Naive thymus-derived CD4-positive, alpha-beta T cell (primary cell): ENCODE measurements at regions of chr12 and their contacts with region 1.

Region 1: GRCh38 chr12:110468212-110469048 is at the starts of genes FAM216A and GPN3:
- DNase-seq: peak; percentile 83 to 98 (median 98)
- ATAC-seq: peak; percentile 94
- H3K4me3 ChIP-seq: peak within 1 kb of the TSS; percentile 95
- H3K4me3 Mint-ChIP-seq: peak within 1 kb of the TSS; percentile 90 to 100 (median 96)
- H3K27ac ChIP-seq: peak within 1 kb of the TSS; percentile 90
- H3K27ac Mint-ChIP-seq: peak within 1 kb of the TSS; percentile 88 to 98 (median 95)
- H3K4me1 ChIP-seq: peaks cover 10 to 19% of the 10 kb centered on the region in 2 donors
- H3K4me1 Mint-ChIP-seq: peaks cover 20 to 68% (median 36%) of the 10 kb centered on the region in 7 donors
- H3K27me3 ChIP-seq: no peaks in the 10 kb centered on the region
- H3K27me3 Mint-ChIP-seq: no peaks in the 10 kb centered on the region
- total RNA-seq, gene FAM216A: 5.3 to 24.1 (median 23.0) TPM
- total RNA-seq, gene GPN3: 5.1 to 19.7 (median 14.6) TPM

Region 2: GRCh38 chr12:110431957-110432587 is 36.4 kb before region 1 on chr12:
- CTCF ChIA-PET with region 1: interaction called, 9 read pairs
- POLR2A ChIA-PET with region 1: interaction called, 6 read pairs
- intact Hi-C with region 1: loop called (anchors 1 kb)
- DNase-seq: no peak
- ATAC-seq: no peak
- H3K4me3 ChIP-seq: no peak overlapping the region
- H3K4me3 Mint-ChIP-seq: peak overlapping the region in 4 of 10 donors; percentile 91 to 100 (median 96)
- H3K27ac ChIP-seq: no peak overlapping the region
- H3K27ac Mint-ChIP-seq: peak overlapping the region in 3 of 9 donors; percentile 96 to 99 (median 98)
- H3K4me1 ChIP-seq: no peaks in the 10 kb centered on the region
- H3K4me1 Mint-ChIP-seq: peaks cover 0 to 5% (median 0%) of the 10 kb centered on the region in 7 donors
- H3K27me3 ChIP-seq: no peaks in the 10 kb centered on the region
- H3K27me3 Mint-ChIP-seq: peaks cover 0 to 3% (median 0%) of the 10 kb centered on the region in 5 donors

Region 3: GRCh38 chr12:110508071-110508586 is 39.7 kb after region 1 on chr12:
- CTCF ChIA-PET with region 1: interaction called, 3 read pairs
- POLR2A ChIA-PET with region 1: interaction called, 5 read pairs
- intact Hi-C with region 1: loop called in 1 of 2 experiments (anchors 1 kb)
- DNase-seq: no peak
- ATAC-seq: no peak
- H3K4me3 ChIP-seq: no peak overlapping the region
- H3K4me3 Mint-ChIP-seq: no peak overlapping the region
- H3K27ac ChIP-seq: no peak overlapping the region
- H3K27ac Mint-ChIP-seq: no peak overlapping the region
- H3K4me1 ChIP-seq: no peaks in the 10 kb centered on the region
- H3K4me1 Mint-ChIP-seq: peaks cover 0 to 3% (median 0%) of the 10 kb centered on the region in 7 donors
- H3K27me3 ChIP-seq: no peaks in the 10 kb centered on the region
- H3K27me3 Mint-ChIP-seq: peaks cover 0 to 5% (median 0%) of the 10 kb centered on the region in 5 donors

Region 4: GRCh38 chr12:110577717-110578521 is 109.5 kb after region 1 on chr12:
- CTCF ChIA-PET with region 1: no interaction called
- POLR2A ChIA-PET with region 1: interaction called, 3 read pairs
- intact Hi-C with region 1: loop called (anchors 1 kb)
- DNase-seq: peak in 2 of 9 donors; percentile 22 to 79
- ATAC-seq: peak; percentile 43
- H3K4me3 ChIP-seq: peak overlapping the region; percentile 14
- H3K4me3 Mint-ChIP-seq: peak overlapping the region; percentile 56 to 96 (median 94)
- H3K27ac ChIP-seq: peak overlapping the region; percentile 74
- H3K27ac Mint-ChIP-seq: peak overlapping the region; percentile 67 to 96 (median 85)
- H3K4me1 ChIP-seq: peaks cover 23 to 48% of the 10 kb centered on the region in 2 donors
- H3K4me1 Mint-ChIP-seq: peaks cover 56 to 85% (median 77%) of the 10 kb centered on the region in 7 donors
- H3K27me3 ChIP-seq: no peaks in the 10 kb centered on the region
- H3K27me3 Mint-ChIP-seq: no peaks in the 10 kb centered on the region

Region 5: DNA sequence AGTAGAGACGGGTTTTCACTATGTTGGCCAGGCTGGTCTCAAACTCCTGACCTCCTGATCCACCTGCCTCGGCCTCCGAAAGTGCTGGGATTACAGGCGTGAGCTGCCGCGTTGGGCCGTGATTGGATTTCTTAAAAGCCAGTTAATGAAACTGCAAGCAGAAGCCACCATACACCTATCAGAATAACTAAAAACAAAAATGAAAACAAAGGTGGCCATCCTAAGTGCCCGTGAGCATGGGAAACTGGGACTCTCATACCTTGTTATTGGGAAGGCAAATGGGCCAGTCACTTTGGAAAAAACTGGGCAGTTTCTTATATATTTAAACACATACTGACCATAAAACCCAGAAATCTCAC is 137.8 kb after region 1 on chr12:
- CTCF ChIA-PET with region 1: interaction called, 49 read pairs
- POLR2A ChIA-PET with region 1: interaction called, 30 read pairs
- intact Hi-C with region 1: loop called in 1 of 2 experiments (anchors 1 kb)
- DNase-seq: no peak
- ATAC-seq: no peak
- H3K4me3 ChIP-seq: peak overlapping the region; percentile 56
- H3K4me3 Mint-ChIP-seq: peak overlapping the region; percentile 83 to 94 (median 90)
- H3K27ac ChIP-seq: peak overlapping the region; percentile 45
- H3K27ac Mint-ChIP-seq: peak overlapping the region; percentile 85 to 96 (median 88)
- H3K4me1 ChIP-seq: no peaks in the 10 kb centered on the region
- H3K4me1 Mint-ChIP-seq: peaks cover 8 to 24% (median 15%) of the 10 kb centered on the region in 7 donors
- H3K27me3 ChIP-seq: no peaks in the 10 kb centered on the region
- H3K27me3 Mint-ChIP-seq: no peaks in the 10 kb centered on the region

Region 6: GRCh38 chr12:110698171-110698902 is 229.9 kb after region 1 on chr12:
- CTCF ChIA-PET with region 1: no interaction called
- POLR2A ChIA-PET with region 1: no interaction called
- intact Hi-C with region 1: loop called (anchors 1 kb)
- DNase-seq: peak; percentile 51 to 87 (median 77)
- ATAC-seq: peak; percentile 96
- H3K4me3 ChIP-seq: no peak overlapping the region
- H3K4me3 Mint-ChIP-seq: peak overlapping the region in 4 of 10 donors; percentile 14 to 69 (median 34)
- H3K27ac ChIP-seq: no peak overlapping the region
- H3K27ac Mint-ChIP-seq: peak overlapping the region in 6 of 9 donors; percentile 49 to 88 (median 74)
- H3K4me1 ChIP-seq: peaks cover 7 to 10% of the 10 kb centered on the region in 2 donors
- H3K4me1 Mint-ChIP-seq: peaks cover 5 to 25% (median 18%) of the 10 kb centered on the region in 7 donors
- H3K27me3 ChIP-seq: no peaks in the 10 kb centered on the region
- H3K27me3 Mint-ChIP-seq: no peaks in the 10 kb centered on the region

Region 7: DNA sequence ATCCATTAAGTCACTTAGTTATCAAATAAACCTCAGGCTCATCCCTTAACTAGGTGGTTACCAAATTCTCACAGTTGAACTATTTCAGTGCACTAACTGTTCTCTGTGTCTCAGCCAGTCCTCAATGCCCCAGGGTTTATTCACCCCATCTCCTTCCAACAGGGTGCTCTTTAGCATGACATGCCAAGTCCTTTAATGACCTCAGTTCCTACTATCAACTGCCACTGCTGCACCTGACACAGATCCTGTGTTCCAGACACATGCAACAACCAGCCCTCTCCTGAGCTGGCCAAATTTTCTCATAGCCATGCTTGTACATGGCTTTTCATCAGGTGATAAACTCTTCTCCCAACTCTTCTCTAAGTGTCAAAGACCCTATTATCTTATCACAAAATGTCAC is 1050.7 kb after region 1 on chr12:
- CTCF ChIA-PET with region 1: no interaction called
- POLR2A ChIA-PET with region 1: no interaction called
- intact Hi-C with region 1: no loop called
- DNase-seq: no peak
- ATAC-seq: no peak
- H3K4me3 ChIP-seq: no peak overlapping the region
- H3K4me3 Mint-ChIP-seq: no peak overlapping the region
- H3K27ac ChIP-seq: no peak overlapping the region
- H3K27ac Mint-ChIP-seq: no peak overlapping the region
- H3K4me1 ChIP-seq: no peaks in the 10 kb centered on the region
- H3K4me1 Mint-ChIP-seq: peaks cover 0 to 4% (median 0%) of the 10 kb centered on the region in 7 donors
- H3K27me3 ChIP-seq: no peaks in the 10 kb centered on the region
- H3K27me3 Mint-ChIP-seq: no peaks in the 10 kb centered on the region